Activated CD4-positive, alpha-beta memory T cell treated with anti-CD3 and anti-CD28 coated beads, Interleukin-2, amount 10 ng/mL, durations not matched to agents 7 days and 5 days (primary cell): ENCODE measurements at regions of chr19 and their contacts with region 1.

Region 1: GRCh38 chr19:1408300-1409203 is 1.2 kb downstream of the DAZAP1 start:
- DNase-seq: peak; percentile 67
- H3K4me3 Mint-ChIP-seq: peak overlapping the region; percentile 92
- H3K27ac Mint-ChIP-seq: peak overlapping the region; percentile 96
- H3K4me1 Mint-ChIP-seq: peaks cover 57% of the 10 kb centered on the region
- H3K27me3 Mint-ChIP-seq: no peaks in the 10 kb centered on the region

Region 2: GRCh38 chr19:1295169-1296012 is 113.2 kb before region 1 on chr19:
- CTCF ChIA-PET with region 1: no interaction called
- POLR2A ChIA-PET with region 1: no interaction called
- DNase-seq: peak; percentile 46
- H3K4me3 Mint-ChIP-seq: no peak overlapping the region
- H3K27ac Mint-ChIP-seq: no peak overlapping the region
- H3K4me1 Mint-ChIP-seq: no peaks in the 10 kb centered on the region
- H3K27me3 Mint-ChIP-seq: peaks cover 5% of the 10 kb centered on the region

Region 3: GRCh38 chr19:1394252-1395193 is 14.0 kb before region 1 on chr19:
- CTCF ChIA-PET with region 1: no interaction called
- POLR2A ChIA-PET with region 1: no interaction called
- DNase-seq: no peak
- H3K4me3 Mint-ChIP-seq: no peak overlapping the region
- H3K27ac Mint-ChIP-seq: no peak overlapping the region
- H3K4me1 Mint-ChIP-seq: peaks cover 9% of the 10 kb centered on the region
- H3K27me3 Mint-ChIP-seq: no peaks in the 10 kb centered on the region

Region 4: GRCh38 chr19:1438035-1438932 is 29.7 kb after region 1 on chr19 and contains the start of gene RPS15:
- CTCF ChIA-PET with region 1: no interaction called
- POLR2A ChIA-PET with region 1: interaction called, 10 read pairs
- DNase-seq: peak; percentile 96
- H3K4me3 Mint-ChIP-seq: peak within 1 kb of the TSS; percentile 99
- H3K27ac Mint-ChIP-seq: peak within 1 kb of the TSS; percentile 97
- H3K4me1 Mint-ChIP-seq: peaks cover 39% of the 10 kb centered on the region
- H3K27me3 Mint-ChIP-seq: no peaks in the 10 kb centered on the region
- total RNA-seq, gene RPS15: 1,378 to 1,409 TPM